Dorsolateral prefrontal cortex (tissue), 120 donors: ENCODE measurements at regions of chr6 and their contacts with region 1.

Region 1: DNA sequence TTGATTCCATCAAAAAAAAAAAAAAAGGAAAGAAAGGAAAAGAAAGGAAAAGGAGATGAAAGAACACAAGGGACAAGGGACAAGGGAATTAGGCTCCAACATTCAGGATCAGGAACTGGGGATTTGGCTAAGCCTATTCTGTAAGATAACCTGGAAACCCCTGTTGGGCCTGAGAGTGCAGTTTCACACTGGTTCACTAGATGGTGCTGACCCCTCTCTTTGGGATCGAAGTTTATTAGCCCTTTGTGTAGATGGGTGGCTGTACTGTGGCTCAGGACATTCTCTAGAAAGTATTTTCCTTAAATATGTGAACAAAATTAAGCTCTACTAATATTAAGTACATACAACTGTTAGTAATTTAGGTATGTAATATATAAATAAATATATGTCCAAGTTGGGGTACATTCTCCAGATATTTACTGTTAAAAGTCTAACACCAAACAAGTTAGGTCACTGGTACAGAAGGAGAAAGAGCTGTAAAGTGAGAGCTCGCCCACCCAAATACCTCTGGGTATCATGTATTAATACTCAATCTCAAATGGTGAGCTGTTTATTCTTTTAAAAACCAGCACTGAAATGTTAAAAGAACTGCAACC is 6.3 kb downstream of the OR2A4 start:
- DNase-seq: peak in 4 of 10 donors; percentile 4 to 48 (median 27)
- H3K4me3 ChIP-seq: no peak overlapping the region
- H3K27ac ChIP-seq: no peak overlapping the region
- H3K27me3 ChIP-seq: no peaks in the 10 kb centered on the region
- CTCF ChIP-seq: peak; percentile 17 to 93 (median 75)

Region 2: GRCh38 chr6:131909408-131910218 is 214.7 kb after region 1 on chr6:
- intact Hi-C with region 1: loop called (anchors 2 kb)
- DNase-seq: peak in 9 of 10 donors; percentile 36 to 89 (median 76)
- H3K4me3 ChIP-seq: no peak overlapping the region
- H3K27ac ChIP-seq: no peak overlapping the region
- H3K27me3 ChIP-seq: peaks cover 0 to 6% (median 0%) of the 10 kb centered on the region in 45 donors
- CTCF ChIP-seq: peak; percentile 80 to 99 (median 93)